Activated CD4-positive, alpha-beta T cell treated with anti-CD3 and anti-CD28 coated beads for 36 hours (primary cell): ENCODE measurements at regions of chr16 and their contacts with region 1.

Region 1: GRCh38 chr16:1492923-1493745 is at the start of gene TELO2:
- DNase-seq: peak; percentile 94
- ATAC-seq: peak; percentile 89
- H3K4me3 Mint-ChIP-seq: peak within 1 kb of the TSS; percentile 92
- H3K27ac Mint-ChIP-seq: peak within 1 kb of the TSS; percentile 97
- H3K4me1 Mint-ChIP-seq: peaks cover 15% of the 10 kb centered on the region
- H3K27me3 Mint-ChIP-seq: no peaks in the 10 kb centered on the region
- total RNA-seq, gene TELO2: 48.1 to 60.0 TPM

Region 2: GRCh38 chr16:1378804-1379303 is 114.3 kb before region 1 on chr16:
- CTCF ChIA-PET with region 1: no interaction called
- POLR2A ChIA-PET with region 1: no interaction called
- intact Hi-C with region 1: loop called in 1 of 2 experiments (anchors 1 kb)
- DNase-seq: peak; percentile 87
- ATAC-seq: peak; percentile 74
- H3K4me3 Mint-ChIP-seq: peak overlapping the region; percentile 87
- H3K27ac Mint-ChIP-seq: peak overlapping the region; percentile 91
- H3K4me1 Mint-ChIP-seq: peaks cover 17% of the 10 kb centered on the region
- H3K27me3 Mint-ChIP-seq: no peaks in the 10 kb centered on the region

Region 3: DNA sequence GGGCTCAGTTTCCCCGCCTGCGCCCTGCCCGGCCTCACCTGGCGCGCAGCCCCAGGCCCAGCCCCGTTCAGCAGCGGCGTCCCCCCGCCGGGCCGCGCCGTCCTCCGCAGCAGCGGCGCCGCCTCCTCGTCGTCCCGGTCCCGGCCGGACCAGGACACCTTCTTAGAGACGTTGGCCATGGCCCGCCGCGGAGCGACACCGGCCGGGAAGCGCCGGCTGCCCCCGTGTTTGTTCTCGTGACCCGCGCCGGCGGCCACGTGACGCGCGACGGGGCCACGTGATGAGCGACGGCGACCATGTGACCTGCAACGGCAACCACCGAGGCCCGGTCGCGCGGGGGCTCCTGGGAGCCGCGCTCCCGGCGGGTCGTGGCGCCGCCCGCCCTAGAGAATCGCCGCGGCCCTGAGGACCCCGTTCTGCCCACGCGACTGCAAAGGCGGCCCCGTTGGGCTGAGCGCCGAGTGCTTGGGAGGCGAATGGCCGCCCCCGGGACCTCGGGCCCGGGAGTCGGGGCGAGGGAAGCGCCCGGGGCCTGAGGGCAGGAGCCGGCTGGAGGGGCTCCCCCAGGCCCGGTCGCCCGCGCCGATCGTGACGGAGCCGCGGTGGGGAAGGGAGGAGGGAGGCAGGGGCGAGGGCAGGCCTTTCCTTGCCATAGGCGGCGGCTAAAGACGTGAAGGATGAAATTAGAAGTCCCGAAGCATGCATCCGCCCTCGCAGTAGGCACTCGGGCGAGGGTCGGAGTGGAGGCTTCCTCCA is 18.2 kb before region 1 on chr16 and contains the start of gene CLCN7:
- CTCF ChIA-PET with region 1: interaction called, 4 read pairs
- POLR2A ChIA-PET with region 1: interaction called, 3 read pairs
- intact Hi-C with region 1: loop called (anchors 1 to 2 kb)
- DNase-seq: peak; percentile 95
- ATAC-seq: peak; percentile 91
- H3K4me3 Mint-ChIP-seq: peak within 1 kb of the TSS; percentile 73
- H3K27ac Mint-ChIP-seq: peak within 1 kb of the TSS; percentile 81
- H3K4me1 Mint-ChIP-seq: peaks cover 22% of the 10 kb centered on the region
- H3K27me3 Mint-ChIP-seq: no peaks in the 10 kb centered on the region
- total RNA-seq, gene CLCN7: 29.9 to 33.7 TPM

Region 4: DNA sequence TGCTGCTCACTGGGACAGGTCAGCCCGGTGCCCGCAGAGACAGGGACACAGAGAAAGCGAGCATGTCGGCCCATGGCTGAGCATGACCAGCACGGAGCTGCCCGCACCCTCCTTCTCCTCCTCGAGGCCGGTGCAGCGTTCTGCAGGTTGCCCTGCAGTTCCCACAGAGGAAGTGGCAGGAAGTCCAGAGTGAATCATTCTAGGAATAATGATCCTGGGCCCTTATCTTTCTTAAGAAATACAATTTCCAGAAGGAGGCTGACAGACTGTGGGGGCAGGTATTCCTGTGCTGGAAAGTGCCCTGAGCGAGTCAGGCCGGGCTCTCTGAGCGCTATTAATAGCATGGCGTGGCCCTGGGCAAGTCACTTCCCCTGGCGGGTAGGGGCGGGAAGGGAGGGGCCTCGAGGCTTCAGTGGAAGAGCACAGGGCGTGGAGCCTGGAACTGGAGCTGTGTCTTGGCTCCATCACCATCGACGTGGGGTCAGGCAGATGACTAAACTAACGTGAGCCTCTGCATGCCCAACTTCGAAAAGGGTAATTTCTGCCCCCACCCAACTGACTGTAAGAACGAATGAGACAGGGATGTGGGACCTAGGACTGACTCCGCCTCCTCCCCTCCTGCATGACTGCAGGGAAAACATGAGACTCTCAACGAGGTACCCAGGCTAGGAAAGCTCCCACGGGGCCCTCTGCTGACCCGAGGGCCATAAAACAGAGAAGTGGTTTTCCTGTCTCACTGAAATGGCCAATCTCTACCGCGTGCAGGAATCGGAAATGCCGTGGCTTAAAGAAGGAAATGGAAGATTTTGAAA is 50.2 kb after region 1 on chr16:
- CTCF ChIA-PET with region 1: no interaction called
- POLR2A ChIA-PET with region 1: no interaction called
- intact Hi-C with region 1: loop called in 1 of 2 experiments (anchors 1 kb)
- DNase-seq: peak; percentile 84
- ATAC-seq: peak; percentile 85
- H3K4me3 Mint-ChIP-seq: peak overlapping the region; percentile 71
- H3K27ac Mint-ChIP-seq: peak overlapping the region; percentile 99
- H3K4me1 Mint-ChIP-seq: peaks cover 78% of the 10 kb centered on the region
- H3K27me3 Mint-ChIP-seq: no peaks in the 10 kb centered on the region

Region 5: GRCh38 chr16:1705688-1706385 is 212.7 kb after region 1 on chr16 and contains the start of gene MAPK8IP3:
- CTCF ChIA-PET with region 1: no interaction called
- POLR2A ChIA-PET with region 1: interaction called, 3 read pairs
- intact Hi-C with region 1: loop called in 1 of 2 experiments (anchors 1 kb)
- DNase-seq: peak; percentile 96
- ATAC-seq: peak; percentile 80
- H3K4me3 Mint-ChIP-seq: peak within 1 kb of the TSS; percentile 92
- H3K27ac Mint-ChIP-seq: peak within 1 kb of the TSS; percentile 90
- H3K4me1 Mint-ChIP-seq: peaks cover 32% of the 10 kb centered on the region
- H3K27me3 Mint-ChIP-seq: no peaks in the 10 kb centered on the region
- total RNA-seq, gene MAPK8IP3: 56.7 to 57.6 TPM

Region 6: GRCh38 chr16:1826691-1827575 is 333.8 kb after region 1 on chr16 and contains the starts of genes FAHD1 and HAGH:
- CTCF ChIA-PET with region 1: no interaction called
- POLR2A ChIA-PET with region 1: no interaction called
- intact Hi-C with region 1: loop called in 1 of 2 experiments (anchors 2 kb)
- DNase-seq: peak; percentile 93
- ATAC-seq: peak; percentile 90
- H3K4me3 Mint-ChIP-seq: peak within 1 kb of the TSS; percentile 91
- H3K27ac Mint-ChIP-seq: peak within 1 kb of the TSS; percentile 89
- H3K4me1 Mint-ChIP-seq: peaks cover 27% of the 10 kb centered on the region
- H3K27me3 Mint-ChIP-seq: no peaks in the 10 kb centered on the region
- total RNA-seq, gene FAHD1: 11.6 to 11.9 TPM
- total RNA-seq, gene HAGH: 20.9 to 25.0 TPM